Mammary epithelial cell (primary cell): ENCODE measurements at regions of chr5 and their contacts with region 1.

Region 1: GRCh38 chr5:55187370-55187769 is 14.4 kb upstream of the CDC20B start:
- DNase-seq: peak; percentile 42
- H3K4me3 ChIP-seq: no peak overlapping the region
- H3K27ac ChIP-seq: no peak overlapping the region
- H3K4me1 ChIP-seq: no peaks in the 10 kb centered on the region
- H3K27me3 ChIP-seq: peaks cover 4% of the 10 kb centered on the region
- CTCF ChIP-seq: peak; percentile 42 to 53

Region 2: GRCh38 chr5:54852007-54852406 is 335.4 kb before region 1 on chr5:
- CTCF ChIA-PET with region 1: no interaction called
- dilution Hi-C with region 1: no loop called
- in situ Hi-C with region 1: no loop called
- intact Hi-C with region 1: no loop called
- DNase-seq: no peak
- H3K4me3 ChIP-seq: no peak overlapping the region
- H3K27ac ChIP-seq: no peak overlapping the region
- H3K4me1 ChIP-seq: no peaks in the 10 kb centered on the region
- H3K27me3 ChIP-seq: peaks cover 2% of the 10 kb centered on the region
- CTCF ChIP-seq: no peak

Region 3: DNA sequence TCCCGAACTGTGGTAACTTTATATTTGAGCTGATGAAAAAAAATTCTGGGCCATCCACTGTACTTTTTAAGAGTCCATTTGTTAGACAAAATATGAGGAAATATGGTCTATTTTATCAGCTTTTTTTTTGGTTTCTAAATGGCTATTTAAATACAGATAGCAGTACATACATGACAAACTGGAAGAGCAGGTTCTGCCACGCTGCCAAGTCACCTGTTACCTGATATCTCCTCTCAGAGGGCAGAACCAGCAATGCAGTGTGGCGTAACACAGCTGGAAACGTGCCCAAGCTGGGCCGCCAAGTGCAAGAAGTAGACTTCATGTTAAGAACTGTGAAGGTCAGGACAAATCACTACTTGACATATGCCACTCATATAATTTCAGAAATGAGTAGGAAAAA is 31.6 kb after region 1 on chr5:
- CTCF ChIA-PET with region 1: interaction called, 10 read pairs
- dilution Hi-C with region 1: no loop called
- in situ Hi-C with region 1: no loop called
- intact Hi-C with region 1: no loop called
- DNase-seq: peak; percentile 73
- H3K4me3 ChIP-seq: no peak overlapping the region
- H3K27ac ChIP-seq: no peak overlapping the region
- H3K4me1 ChIP-seq: peaks cover 12% of the 10 kb centered on the region
- H3K27me3 ChIP-seq: no peaks in the 10 kb centered on the region
- CTCF ChIP-seq: no peak